ENCODE measurements at regions of chr16 and their contacts with region 1.

Region 1: DNA sequence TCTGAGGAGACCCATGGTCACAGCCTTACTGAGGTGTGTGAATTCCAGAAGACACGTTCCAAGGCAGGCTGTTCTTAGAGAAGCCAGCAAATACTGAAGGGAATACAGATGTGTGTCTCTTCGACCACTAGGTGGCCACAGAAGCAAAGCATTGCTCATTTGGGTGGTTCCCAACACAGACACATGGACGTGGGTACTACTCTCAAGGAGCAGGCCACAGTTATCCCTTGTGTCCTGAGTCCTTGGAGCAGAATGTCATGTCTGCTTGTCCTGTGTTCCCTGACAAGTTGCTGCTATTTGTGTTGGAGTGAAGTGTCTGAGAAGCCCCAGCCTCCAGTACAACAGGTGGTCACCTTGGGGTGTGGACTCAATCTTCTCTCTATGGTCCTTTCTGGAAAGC is 30.3 kb downstream of the HMOX2 start:
- DNase-seq: peak in 1 of 2 donors; percentile 67
- ATAC-seq: peak; percentile 75
- H3K4me3 ChIP-seq: no peak overlapping the region
- H3K27ac ChIP-seq: no peak overlapping the region
- H3K4me1 ChIP-seq: no peaks in the 10 kb centered on the region
- H3K27me3 ChIP-seq: no peaks in the 10 kb centered on the region

Region 2: DNA sequence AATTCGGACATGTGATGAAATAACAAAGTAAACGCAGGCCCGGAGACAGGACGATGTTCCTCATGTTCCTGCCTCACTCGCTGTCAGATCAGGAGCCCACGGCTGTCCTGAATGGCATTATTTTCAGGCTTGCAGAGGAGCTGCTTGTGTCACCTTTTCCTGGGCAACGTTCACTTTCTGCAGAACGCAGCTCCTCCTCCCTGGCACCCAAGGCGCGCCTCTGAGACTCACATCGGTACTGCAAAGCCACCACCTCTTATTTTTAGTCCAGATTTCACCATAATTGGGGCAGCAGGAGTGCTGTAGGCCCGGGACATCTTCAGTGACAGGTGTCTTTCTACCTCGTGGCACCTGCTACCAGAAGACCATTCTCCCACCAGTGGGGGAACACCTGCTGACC is 41.7 kb after region 1 on chr16:
- intact Hi-C with region 1: loop called (anchors 2 kb)
- DNase-seq: no peak
- ATAC-seq: no peak
- H3K4me3 ChIP-seq: no peak overlapping the region
- H3K27ac ChIP-seq: no peak overlapping the region
- H3K4me1 ChIP-seq: no peaks in the 10 kb centered on the region
- H3K27me3 ChIP-seq: no peaks in the 10 kb centered on the region

Region 3: GRCh38 chr16:4561596-4561995 is 55.1 kb after region 1 on chr16:
- intact Hi-C with region 1: no loop called
- DNase-seq: no peak
- ATAC-seq: no peak
- H3K4me3 ChIP-seq: no peak overlapping the region
- H3K27ac ChIP-seq: no peak overlapping the region
- H3K4me1 ChIP-seq: no peaks in the 10 kb centered on the region
- H3K27me3 ChIP-seq: no peaks in the 10 kb centered on the region

Region 4: DNA sequence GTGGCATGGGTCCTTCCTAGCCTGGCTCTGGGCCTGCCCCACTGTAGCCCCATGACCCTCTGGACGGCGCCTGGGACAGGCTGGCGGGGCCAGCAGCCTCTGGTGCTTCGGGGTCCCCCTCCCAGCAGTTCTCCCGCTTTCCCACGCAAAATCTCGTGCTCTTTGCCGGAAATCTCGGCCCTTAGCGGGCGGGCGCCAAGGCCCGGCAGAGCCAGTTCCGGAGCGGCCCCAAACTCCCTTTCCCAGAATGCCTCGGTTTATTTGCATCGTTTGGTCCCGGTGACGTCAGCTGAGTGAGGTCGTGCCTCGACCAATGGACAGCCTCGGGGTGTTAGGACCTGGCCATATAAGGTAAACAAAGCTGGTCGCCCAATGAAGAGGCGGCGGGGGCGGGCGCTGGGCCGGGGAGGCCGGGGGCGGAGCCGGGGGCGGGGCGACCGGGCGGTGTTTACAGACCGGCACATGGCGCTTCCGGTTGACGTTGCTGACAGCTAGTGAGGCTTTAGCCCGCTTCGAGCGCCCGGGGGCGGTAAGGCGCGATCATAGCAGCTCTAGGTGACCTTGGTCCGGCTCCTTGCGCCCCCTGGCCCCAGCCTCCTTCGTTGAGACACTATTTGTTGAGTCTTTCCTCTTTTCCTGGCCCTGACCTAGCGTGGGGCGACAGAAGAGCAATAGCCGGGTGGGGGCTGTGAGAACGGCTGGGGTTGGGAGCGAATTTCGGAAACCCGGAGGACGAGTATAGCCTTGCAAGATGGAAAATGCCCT is 109.8 kb after region 1 on chr16:
- intact Hi-C with region 1: loop called in 1 of 2 experiments (anchors 10 kb)
- DNase-seq: peak; percentile 99 to 100
- ATAC-seq: peak; percentile 95
- H3K4me3 ChIP-seq: peak overlapping the region; percentile 41 to 65
- H3K27ac ChIP-seq: peak overlapping the region; percentile 82 to 89
- H3K4me1 ChIP-seq: no peaks in the 10 kb centered on the region
- H3K27me3 ChIP-seq: no peaks in the 10 kb centered on the region

Region 5: DNA sequence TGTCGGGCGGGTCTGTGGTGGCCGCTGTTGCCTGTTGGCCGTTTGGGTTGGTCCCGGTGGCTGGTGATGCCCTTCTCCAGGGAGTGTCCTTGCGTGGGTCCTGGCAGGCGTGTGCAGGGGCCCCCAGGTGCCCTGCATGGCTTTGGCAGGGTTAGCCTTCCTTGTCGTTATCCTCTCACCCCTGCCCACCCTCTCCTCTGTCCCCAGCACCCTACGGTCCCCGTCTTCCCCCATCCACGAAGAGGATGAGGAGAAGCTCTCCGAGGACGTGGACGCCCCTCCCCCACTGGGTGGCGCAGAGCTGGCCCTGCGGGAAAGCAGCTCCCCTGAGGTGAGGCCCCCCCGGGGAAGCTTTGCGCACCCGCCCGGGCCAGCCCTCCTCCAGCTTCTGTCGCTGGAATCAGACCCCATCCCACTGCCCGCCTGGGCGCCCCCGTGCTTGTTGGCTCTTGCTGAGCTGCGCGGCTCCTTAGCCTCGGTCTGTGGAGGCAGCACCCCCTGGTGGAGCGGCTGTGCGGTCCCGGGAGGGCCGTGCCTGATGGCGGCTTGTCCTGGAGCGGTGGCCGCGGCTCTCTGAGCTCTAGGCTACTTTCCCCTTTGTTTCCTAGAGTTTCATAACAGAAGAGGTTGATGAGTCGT is 176.3 kb after region 1 on chr16:
- intact Hi-C with region 1: no loop called
- DNase-seq: no peak
- ATAC-seq: no peak
- H3K4me3 ChIP-seq: no peak overlapping the region
- H3K27ac ChIP-seq: no peak overlapping the region
- H3K4me1 ChIP-seq: no peaks in the 10 kb centered on the region
- H3K27me3 ChIP-seq: no peaks in the 10 kb centered on the region

Measured in aorta (tissue), 5 donors.